Activated CD4-positive, alpha-beta T cell treated with anti-CD3 and anti-CD28 coated beads for 36 hours (primary cell): ENCODE measurements at regions of chr6 and their contacts with region 1.

Region 1: DNA sequence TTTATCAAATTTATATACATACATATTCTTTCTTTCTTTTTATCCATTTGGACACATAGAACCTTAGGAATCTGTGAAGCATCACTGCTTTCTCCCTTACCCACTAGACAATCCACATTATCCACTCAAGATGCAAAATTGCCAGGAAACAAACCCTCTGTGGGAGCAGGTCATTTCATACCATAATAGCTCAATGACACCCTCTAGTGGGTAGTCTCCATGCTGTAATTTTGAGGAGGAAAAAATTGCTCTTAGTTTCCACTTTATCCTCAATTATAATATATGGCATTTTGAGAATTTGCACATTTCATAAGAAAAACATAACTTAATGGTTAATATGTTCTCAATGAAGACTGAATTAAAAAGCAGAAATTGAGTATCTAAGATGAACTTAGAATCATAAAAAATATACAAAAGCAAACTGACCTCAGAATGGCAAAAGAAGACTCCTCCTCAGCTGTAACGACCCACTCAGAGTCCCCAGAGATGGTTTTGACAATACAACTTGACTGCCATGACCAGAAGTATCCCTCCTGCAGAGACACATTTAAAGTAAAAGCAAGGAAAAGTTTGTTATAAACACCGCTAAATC is 164.1 kb downstream of the FRK start:
- DNase-seq: no peak
- ATAC-seq: no peak
- H3K4me3 Mint-ChIP-seq: no peak overlapping the region
- H3K27ac Mint-ChIP-seq: no peak overlapping the region
- H3K4me1 Mint-ChIP-seq: no peaks in the 10 kb centered on the region
- H3K27me3 Mint-ChIP-seq: peaks cover 4% of the 10 kb centered on the region

Region 2: DNA sequence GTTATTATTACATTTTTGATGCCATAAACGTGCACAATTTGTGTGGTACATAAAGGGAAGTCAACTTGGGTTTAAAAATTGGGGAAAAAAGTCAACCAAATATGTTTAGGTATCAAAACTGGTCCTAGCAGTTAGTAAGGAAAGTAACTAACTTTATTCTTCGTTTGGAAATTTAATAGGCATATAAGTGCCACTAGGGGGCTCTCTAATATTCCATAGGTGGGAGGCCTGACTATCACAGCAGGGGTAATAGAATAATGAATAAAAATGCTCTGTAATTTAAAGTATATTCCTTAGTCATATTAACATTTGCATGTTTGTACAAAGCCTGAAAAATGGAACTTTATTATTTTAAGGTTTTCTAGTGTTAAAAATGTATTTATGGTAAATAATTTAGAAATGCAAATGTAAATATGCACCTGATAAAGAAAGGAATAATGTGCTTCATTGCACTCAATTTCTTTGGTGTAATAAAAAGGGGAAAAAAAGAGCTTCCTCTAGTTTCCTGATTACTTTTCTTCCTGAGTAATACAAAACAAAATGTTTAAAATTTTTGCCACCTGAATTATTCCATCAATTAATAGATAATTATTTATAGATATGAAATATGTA is 1800.0 kb before region 1 on chr6:
- CTCF ChIA-PET with region 1: interaction called, 3 read pairs
- POLR2A ChIA-PET with region 1: no interaction called
- intact Hi-C with region 1: loop called in 1 of 2 experiments (anchors 2 kb)
- DNase-seq: no peak
- ATAC-seq: no peak
- H3K4me3 Mint-ChIP-seq: no peak overlapping the region
- H3K27ac Mint-ChIP-seq: no peak overlapping the region
- H3K4me1 Mint-ChIP-seq: no peaks in the 10 kb centered on the region
- H3K27me3 Mint-ChIP-seq: peaks cover 4% of the 10 kb centered on the region

Region 3: DNA sequence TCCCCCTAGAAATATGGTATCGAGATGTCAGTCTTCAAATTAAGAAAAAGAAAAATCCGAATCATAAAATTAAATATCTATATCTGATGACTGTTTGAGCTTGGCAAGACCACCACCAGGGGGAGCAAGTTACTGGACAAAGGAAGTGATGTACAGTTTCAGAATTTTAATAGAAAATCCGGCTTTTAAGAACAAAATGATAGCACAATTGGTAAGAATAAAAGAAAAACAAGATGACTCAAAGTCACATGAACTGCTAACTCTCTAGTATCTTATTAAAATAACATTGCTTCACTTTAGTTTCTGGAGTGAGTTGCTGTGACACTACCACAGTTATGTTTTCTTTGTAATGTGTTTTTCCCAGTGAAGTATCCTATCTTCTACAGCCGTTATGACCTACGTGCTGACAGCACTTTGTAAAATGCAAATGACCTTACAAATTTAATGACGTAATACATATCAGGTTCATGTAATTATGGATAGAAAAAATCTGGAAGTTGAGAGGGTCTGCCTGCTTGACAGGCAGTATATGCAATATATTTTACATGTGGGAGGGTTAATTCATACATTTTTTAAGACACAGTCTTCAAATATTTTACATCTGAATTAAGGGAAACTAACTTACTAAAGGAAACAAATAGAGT is 1148.5 kb before region 1 on chr6:
- CTCF ChIA-PET with region 1: no interaction called
- POLR2A ChIA-PET with region 1: no interaction called
- intact Hi-C with region 1: loop called in 1 of 2 experiments (anchors 1 kb)
- DNase-seq: peak; percentile 53
- ATAC-seq: no peak
- H3K4me3 Mint-ChIP-seq: no peak overlapping the region
- H3K27ac Mint-ChIP-seq: no peak overlapping the region
- H3K4me1 Mint-ChIP-seq: no peaks in the 10 kb centered on the region
- H3K27me3 Mint-ChIP-seq: no peaks in the 10 kb centered on the region

Region 4: DNA sequence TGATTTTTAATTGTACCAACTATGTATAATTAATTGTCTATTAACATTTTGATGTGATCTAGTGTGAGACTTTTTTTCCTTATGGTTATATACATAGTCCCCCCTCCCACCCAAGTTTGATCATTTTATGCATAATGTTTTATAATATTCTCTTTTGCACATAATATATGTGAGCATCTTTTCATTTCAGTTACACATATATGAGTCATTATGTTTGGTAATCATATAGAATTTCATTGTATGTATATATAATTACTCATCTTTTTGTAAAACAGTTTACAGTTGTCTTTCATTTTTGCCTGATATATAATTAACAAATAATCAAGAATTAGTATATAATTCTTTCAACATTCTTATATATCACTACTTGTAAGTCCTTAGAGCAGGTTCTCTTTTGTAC is 689.6 kb after region 1 on chr6:
- CTCF ChIA-PET with region 1: no interaction called
- POLR2A ChIA-PET with region 1: no interaction called
- intact Hi-C with region 1: no loop called
- DNase-seq: no peak
- ATAC-seq: no peak
- H3K4me3 Mint-ChIP-seq: no peak overlapping the region
- H3K27ac Mint-ChIP-seq: no peak overlapping the region
- H3K4me1 Mint-ChIP-seq: no peaks in the 10 kb centered on the region
- H3K27me3 Mint-ChIP-seq: no peaks in the 10 kb centered on the region